PC-3 (cell line): ENCODE measurements at regions of chr20 and their contacts with region 1.

Region 1: GRCh38 chr20:22586645-22587310 is 2.4 kb upstream of the FOXA2 start:
- DNase-seq: peak; percentile 63
- ATAC-seq: peak; percentile 19
- H3K4me3 ChIP-seq: peak overlapping the region; percentile 58
- H3K27ac ChIP-seq: no peak overlapping the region
- H3K4me1 ChIP-seq: peaks cover 6% of the 10 kb centered on the region; the same call in 1 of the 2 replicates
- H3K27me3 ChIP-seq: peaks cover 27% of the 10 kb centered on the region
- CTCF ChIP-seq: peak; percentile 95

Region 2: GRCh38 chr20:22490287-22491193 is 96.2 kb before region 1 on chr20:
- CTCF ChIA-PET with region 1: interaction called, 3 read pairs
- POLR2A ChIA-PET with region 1: interaction called, 4 read pairs
- intact Hi-C with region 1: loop called (anchors 1 kb)
- DNase-seq: peak; percentile 61
- ATAC-seq: peak; percentile 89
- H3K4me3 ChIP-seq: no peak overlapping the region
- H3K27ac ChIP-seq: no peak overlapping the region
- H3K4me1 ChIP-seq: peaks cover 10% of the 10 kb centered on the region; the same call in 1 of the 2 replicates
- H3K27me3 ChIP-seq: no peaks in the 10 kb centered on the region
- CTCF ChIP-seq: peak; percentile 71

Region 3: DNA sequence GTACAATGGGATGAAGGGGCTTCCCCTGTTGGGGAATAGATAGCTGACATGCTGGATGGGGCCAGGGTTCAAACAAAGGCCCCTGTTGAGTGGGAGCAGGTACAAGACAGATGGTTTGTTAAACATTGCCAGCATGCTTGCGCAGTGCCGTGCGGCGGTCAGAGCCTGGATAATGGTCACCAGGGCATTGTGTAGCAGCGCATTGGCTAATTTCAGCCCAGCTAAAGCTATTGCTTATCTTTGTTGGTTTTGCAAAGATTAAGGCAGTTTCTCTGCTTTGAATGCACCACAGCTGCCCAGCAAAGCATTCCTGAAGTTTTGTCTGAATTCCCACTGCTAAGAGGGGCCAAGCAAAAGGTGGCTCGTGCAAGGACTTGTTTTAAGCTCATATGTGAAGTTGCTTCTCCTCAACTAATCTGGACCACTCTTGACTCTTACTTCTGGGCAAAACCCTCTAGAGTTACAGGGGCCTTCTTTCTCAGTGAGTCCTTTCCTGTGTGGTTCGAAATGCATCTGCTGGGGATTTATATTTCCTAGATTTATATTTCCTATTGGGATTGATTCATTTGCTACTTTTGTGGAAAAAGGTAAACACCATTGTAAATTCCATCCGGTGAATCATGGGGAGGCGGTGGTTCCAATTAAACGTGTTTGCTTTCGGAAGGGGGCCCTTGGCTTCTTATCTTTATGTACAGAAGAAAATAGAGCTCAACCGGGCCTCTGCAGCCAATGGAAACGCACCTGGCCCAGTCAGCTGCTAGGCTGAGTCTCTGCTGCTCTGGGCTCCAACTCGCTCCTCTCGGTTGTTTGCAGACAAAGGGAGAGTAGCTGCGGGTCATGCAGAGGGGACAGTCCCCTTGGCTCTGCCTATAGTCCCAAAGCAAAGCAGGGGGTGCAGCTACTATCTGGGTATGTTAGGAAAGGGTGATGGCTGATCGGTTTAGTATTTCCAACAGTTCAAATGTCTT is 74.6 kb before region 1 on chr20:
- CTCF ChIA-PET with region 1: interaction called, 4 read pairs
- POLR2A ChIA-PET with region 1: interaction called, 3 read pairs
- intact Hi-C with region 1: loop called (anchors 2 kb)
- DNase-seq: peak; percentile 99
- ATAC-seq: peak; percentile 97
- H3K4me3 ChIP-seq: no peak overlapping the region; the same call in 1 of the 2 replicates
- H3K27ac ChIP-seq: peak overlapping the region; percentile 88
- H3K4me1 ChIP-seq: peaks cover 29% of the 10 kb centered on the region
- H3K27me3 ChIP-seq: no peaks in the 10 kb centered on the region
- CTCF ChIP-seq: no peak

Region 4: DNA sequence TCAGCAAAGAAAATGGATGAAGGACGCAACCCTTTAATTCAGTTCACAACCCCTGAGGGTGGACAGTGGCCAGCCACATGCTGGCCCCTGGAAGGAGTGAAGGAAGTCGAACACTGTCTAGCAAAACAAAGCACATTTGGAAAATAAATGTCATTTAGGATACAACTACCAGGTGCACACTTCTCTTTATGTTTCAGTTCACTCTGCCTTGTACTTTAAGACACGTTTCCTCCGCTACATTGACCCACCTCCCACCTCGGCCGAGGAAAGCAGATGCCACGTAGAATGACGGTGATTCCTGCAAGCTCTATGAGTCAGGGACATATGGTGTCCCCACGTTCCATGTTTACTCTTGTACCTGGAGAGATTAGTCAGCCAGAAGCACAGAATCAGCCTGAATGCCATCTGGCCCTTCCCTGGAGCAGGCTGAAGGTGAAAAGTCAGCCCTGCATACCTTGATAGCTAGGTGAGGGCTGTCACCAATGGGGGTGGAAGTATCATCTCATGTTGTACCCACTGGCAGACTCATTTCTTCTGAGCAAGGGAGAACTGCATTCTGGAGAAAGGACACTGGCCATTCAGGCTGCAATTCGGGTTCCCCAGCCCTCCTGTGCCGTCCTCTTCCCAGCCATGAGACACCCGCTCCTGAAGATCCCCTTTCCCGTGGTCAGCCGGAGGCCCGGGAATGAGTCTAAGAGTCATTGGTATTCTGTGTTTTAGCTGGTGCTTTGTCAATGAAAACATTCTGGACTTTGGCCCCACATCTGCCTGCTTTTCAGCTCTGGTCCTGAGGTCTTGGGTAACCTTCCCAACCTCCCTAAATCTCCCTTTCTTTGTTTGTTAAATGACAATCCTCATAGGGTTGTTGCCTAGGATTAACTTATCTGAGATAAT is 63.0 kb before region 1 on chr20:
- CTCF ChIA-PET with region 1: no interaction called
- POLR2A ChIA-PET with region 1: no interaction called
- intact Hi-C with region 1: no loop called
- DNase-seq: peak; percentile 82
- ATAC-seq: peak; percentile 95
- H3K4me3 ChIP-seq: no peak overlapping the region
- H3K27ac ChIP-seq: peak overlapping the region; percentile 31
- H3K4me1 ChIP-seq: peaks cover 22% of the 10 kb centered on the region
- H3K27me3 ChIP-seq: no peaks in the 10 kb centered on the region
- CTCF ChIP-seq: no peak

Region 5: DNA sequence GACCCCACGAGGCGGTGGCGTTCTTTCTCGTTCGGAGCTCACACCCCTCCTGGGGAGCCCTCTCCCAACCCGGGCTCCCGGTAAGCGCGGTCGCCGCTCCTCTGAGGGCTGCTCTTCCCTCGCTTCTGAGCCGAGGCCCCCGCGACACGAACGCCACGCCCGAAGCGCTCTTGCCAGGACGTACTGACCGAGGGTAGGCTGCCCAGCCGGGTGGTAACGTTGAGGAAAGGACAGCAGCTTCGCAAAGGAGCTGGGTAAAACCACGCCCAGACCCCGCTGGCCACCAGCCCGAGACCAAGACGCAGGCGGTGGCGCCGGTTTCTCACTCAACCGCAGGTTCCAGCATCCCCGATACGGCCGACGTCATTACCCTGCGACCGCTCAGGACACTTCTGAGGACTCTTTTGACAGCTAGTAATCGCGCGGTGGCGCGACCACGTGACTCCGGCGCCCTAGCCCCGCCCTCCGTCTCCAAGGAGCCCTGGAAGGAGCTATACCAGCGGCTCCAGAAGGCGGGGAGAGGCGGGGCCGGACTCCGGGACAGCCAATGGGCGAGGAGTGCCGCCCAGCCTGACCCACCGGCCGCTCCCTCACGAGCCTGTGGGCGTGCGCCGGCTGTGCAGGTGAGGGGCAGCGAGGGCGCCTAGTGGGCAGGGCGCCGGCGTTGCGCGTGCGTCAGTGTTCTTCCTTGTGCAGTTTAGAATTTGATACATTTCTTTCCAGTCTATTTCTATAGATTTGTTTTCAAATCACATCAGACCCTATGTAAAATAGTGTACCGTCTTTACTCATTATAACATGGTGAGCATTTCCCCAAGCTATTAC is 771.2 kb after region 1 on chr20:
- CTCF ChIA-PET with region 1: no interaction called
- POLR2A ChIA-PET with region 1: no interaction called
- intact Hi-C with region 1: loop called (anchors 5 kb)
- DNase-seq: peak; percentile 100
- ATAC-seq: peak; percentile 79
- H3K4me3 ChIP-seq: peak overlapping the region; percentile 84
- H3K27ac ChIP-seq: peak overlapping the region; percentile 86
- H3K4me1 ChIP-seq: peaks cover 27% of the 10 kb centered on the region
- H3K27me3 ChIP-seq: no peaks in the 10 kb centered on the region
- CTCF ChIP-seq: no peak